H1 (cell line): ENCODE measurements at regions of chr1 and their contacts with region 1.

Region 1: GRCh38 chr1:204494281-204495077 is at the start of gene PIK3C2B:
- DNase-seq: peak; percentile 69 to 93
- H3K4me3 ChIP-seq: peak within 1 kb of the TSS; percentile 82 to 96 (median 94)
- H3K27ac ChIP-seq: peak within 1 kb of the TSS; percentile 31; the same call in 1 of the 2 replicates
- H3K4me1 ChIP-seq: peaks cover 0 to 14% (median 6%) of the 10 kb centered on the region in 4 experiments; a peak in 5 of 7 replicates
- H3K27me3 ChIP-seq: peaks cover 0 to 3% (median under 1%) of the 10 kb centered on the region in 4 experiments; a peak in 2 of 7 replicates
- CTCF ChIP-seq: peak; percentile 56 to 69 (median 57)
- EP300 ChIP-seq: no peak; a peak in 1 of 3 replicates
- POLR2A ChIP-seq: peak; percentile 74 to 83
- RAD21 ChIP-seq: peak; percentile 24 to 46; a peak in 2 of 4 replicates
- total RNA-seq, gene PIK3C2B: 36.7 and 36.9 TPM in 2 replicates

Region 2: GRCh38 chr1:204446370-204447111 is 47.9 kb before region 1 on chr1:
- CTCF ChIA-PET with region 1: interaction called, 2,124 read pairs
- POLR2A ChIA-PET with region 1: interaction called, 28 read pairs
- DNase-seq: peak; percentile 75 to 95
- H3K4me3 ChIP-seq: no peak overlapping the region; a peak in 1 of 8 replicates
- H3K27ac ChIP-seq: no peak overlapping the region
- H3K4me1 ChIP-seq: peaks cover 0 to 13% (median 7%) of the 10 kb centered on the region in 4 experiments; a peak in 6 of 7 replicates
- H3K27me3 ChIP-seq: no peaks in the 10 kb centered on the region
- CTCF ChIP-seq: peak; percentile 88 to 97 (median 93)
- EP300 ChIP-seq: no peak
- POLR2A ChIP-seq: no peak
- RAD21 ChIP-seq: peak; percentile 90 to 97

Region 3: GRCh38 chr1:204453141-204453772 is 41.2 kb before region 1 on chr1:
- CTCF ChIA-PET with region 1: interaction called, 2,124 read pairs
- POLR2A ChIA-PET with region 1: interaction called, 42 read pairs
- DNase-seq: no peak
- H3K4me3 ChIP-seq: no peak overlapping the region
- H3K27ac ChIP-seq: no peak overlapping the region
- H3K4me1 ChIP-seq: peaks cover 12 to 40% (median 23%) of the 10 kb centered on the region in 4 experiments
- H3K27me3 ChIP-seq: no peaks in the 10 kb centered on the region
- CTCF ChIP-seq: no peak
- EP300 ChIP-seq: no peak
- POLR2A ChIP-seq: no peak
- RAD21 ChIP-seq: no peak

Region 4: GRCh38 chr1:204465546-204466415 is 28.7 kb before region 1 on chr1:
- CTCF ChIA-PET with region 1: interaction called, 2,124 read pairs
- POLR2A ChIA-PET with region 1: interaction called, 13 read pairs
- DNase-seq: no peak
- H3K4me3 ChIP-seq: no peak overlapping the region
- H3K27ac ChIP-seq: no peak overlapping the region
- H3K4me1 ChIP-seq: peaks cover 0 to 5% (median under 1%) of the 10 kb centered on the region in 4 experiments; a peak in 2 of 7 replicates
- H3K27me3 ChIP-seq: no peaks in the 10 kb centered on the region
- CTCF ChIP-seq: no peak
- EP300 ChIP-seq: no peak
- POLR2A ChIP-seq: no peak
- RAD21 ChIP-seq: no peak

Region 5: GRCh38 chr1:204480515-204480914 is 14.0 kb before region 1 on chr1:
- CTCF ChIA-PET with region 1: interaction called, 359 read pairs
- POLR2A ChIA-PET with region 1: interaction called, 15 read pairs
- DNase-seq: no peak
- H3K4me3 ChIP-seq: no peak overlapping the region
- H3K27ac ChIP-seq: no peak overlapping the region
- H3K4me1 ChIP-seq: peaks cover 3 to 13% (median 9%) of the 10 kb centered on the region in 4 experiments
- H3K27me3 ChIP-seq: no peaks in the 10 kb centered on the region; a peak in 1 of 7 replicates
- CTCF ChIP-seq: no peak
- EP300 ChIP-seq: no peak
- POLR2A ChIP-seq: no peak
- RAD21 ChIP-seq: no peak

Region 6: DNA sequence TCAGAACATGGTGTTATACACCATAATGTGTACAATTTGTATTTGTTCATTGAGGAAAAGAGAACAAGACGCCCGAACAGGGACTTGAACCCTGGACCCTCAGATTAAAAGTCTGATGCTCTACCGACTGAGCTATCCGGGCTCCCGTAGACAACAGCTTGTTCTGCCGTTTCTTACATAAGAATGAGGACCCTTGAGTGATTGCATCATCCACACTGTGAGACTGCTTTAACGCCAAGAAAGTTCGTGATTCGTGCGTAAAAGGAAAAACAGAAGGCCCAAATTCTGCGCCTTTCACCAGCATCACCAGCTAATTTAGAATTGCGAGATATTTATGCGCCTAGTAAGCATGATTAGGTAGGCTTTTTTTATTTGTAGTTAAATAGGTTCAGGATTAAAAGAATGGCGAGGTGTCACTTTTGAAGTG is 12.5 kb after region 1 on chr1:
- CTCF ChIA-PET with region 1: interaction called, 359 read pairs
- POLR2A ChIA-PET with region 1: interaction called, 56 read pairs
- DNase-seq: peak; percentile 71 to 99
- H3K4me3 ChIP-seq: peak overlapping the region; percentile 80 to 90 (median 88)
- H3K27ac ChIP-seq: peak overlapping the region; percentile 82
- H3K4me1 ChIP-seq: peaks cover 0 to 2% (median 0%) of the 10 kb centered on the region in 4 experiments; a peak in 1 of 7 replicates
- H3K27me3 ChIP-seq: no peaks in the 10 kb centered on the region
- CTCF ChIP-seq: no peak
- EP300 ChIP-seq: no peak
- POLR2A ChIP-seq: peak in 1 of 2 experiments; percentile 28; a peak in 2 of 3 replicates
- RAD21 ChIP-seq: no peak

Region 7: DNA sequence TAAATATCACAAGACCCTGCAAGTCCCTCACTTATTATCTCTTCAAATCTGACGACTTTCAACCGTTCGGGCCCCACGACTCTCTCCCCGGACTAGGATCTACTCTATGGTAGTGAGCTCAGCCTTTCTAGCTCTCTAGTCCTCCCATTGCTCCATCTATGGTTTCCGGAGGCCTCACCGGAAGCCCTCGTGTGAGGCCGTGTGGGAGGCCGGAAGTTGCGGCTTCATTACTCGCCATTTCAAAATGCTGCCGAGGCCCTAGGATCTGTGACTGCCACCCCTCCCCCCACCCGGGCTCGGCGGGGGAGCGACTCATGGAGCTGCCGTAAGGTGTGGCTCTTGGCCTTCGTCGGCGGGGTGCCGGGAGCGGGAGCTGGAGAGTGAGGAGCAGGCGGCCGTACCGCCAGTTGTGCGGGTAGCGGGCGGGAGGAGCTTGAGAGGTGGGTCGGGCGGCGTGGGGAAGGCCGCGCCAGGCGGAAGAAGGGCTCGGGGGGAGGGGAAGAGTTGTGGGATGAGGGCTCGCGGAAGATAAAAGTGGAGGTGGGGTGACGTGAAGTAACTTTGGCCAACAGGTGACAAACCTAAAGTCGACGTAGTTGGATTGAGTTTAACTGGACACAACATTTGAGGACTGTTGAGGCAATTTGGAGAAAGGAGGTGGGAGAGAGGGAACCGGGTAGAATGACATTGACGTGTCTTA is 21.9 kb after region 1 on chr1 and contains the start of gene MDM4:
- CTCF ChIA-PET with region 1: interaction called, 4 read pairs
- POLR2A ChIA-PET with region 1: interaction called, 23 read pairs
- DNase-seq: peak; percentile 90 to 99
- H3K4me3 ChIP-seq: peak within 1 kb of the TSS; percentile 75 to 91 (median 84)
- H3K27ac ChIP-seq: peak within 1 kb of the TSS; percentile 97
- H3K4me1 ChIP-seq: no peaks in the 10 kb centered on the region; a peak in 1 of 7 replicates
- H3K27me3 ChIP-seq: no peaks in the 10 kb centered on the region
- CTCF ChIP-seq: no peak
- EP300 ChIP-seq: peak in 1 of 2 experiments; percentile 68; a peak in 2 of 3 replicates
- POLR2A ChIP-seq: peak in 1 of 2 experiments; percentile 75; a peak in 1 of 3 replicates
- RAD21 ChIP-seq: no peak
- total RNA-seq, gene MDM4: 81.7 and 84.9 TPM in 2 replicates